Dendritic cell treated with granulocyte-macrophage colony-stimulating factor and Interleukin-4, amounts not matched to agents 40 ng/mL and 50 ng/mL, for 4 days (primary cell): ENCODE measurements at regions of chr17 and their contacts with region 1.

Region 1: DNA sequence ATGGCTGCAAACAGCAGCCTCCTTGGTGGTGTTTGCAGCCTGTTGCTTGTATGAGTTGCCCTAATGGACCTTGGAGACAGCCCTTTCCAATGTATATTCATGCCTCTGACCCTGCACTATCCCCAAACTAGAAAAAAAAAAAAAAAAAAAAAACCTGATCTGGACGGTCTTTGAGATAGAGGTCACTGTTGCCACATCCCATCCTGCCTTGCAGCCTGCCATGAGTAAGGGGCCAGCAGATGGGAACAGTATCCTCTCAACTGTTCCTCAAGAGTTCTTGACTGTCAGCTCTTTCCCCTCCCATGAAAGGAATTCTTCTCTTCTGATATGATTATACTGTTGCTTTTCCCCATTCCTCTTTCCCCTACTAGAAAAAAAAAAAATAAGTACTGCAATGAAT is 152.4 kb downstream of the SSH2 start:
- H3K4me3 Mint-ChIP-seq: no peak overlapping the region
- H3K27ac Mint-ChIP-seq: no peak overlapping the region
- H3K4me1 Mint-ChIP-seq: peaks cover 6% of the 10 kb centered on the region
- H3K27me3 Mint-ChIP-seq: no peaks in the 10 kb centered on the region

Region 2: DNA sequence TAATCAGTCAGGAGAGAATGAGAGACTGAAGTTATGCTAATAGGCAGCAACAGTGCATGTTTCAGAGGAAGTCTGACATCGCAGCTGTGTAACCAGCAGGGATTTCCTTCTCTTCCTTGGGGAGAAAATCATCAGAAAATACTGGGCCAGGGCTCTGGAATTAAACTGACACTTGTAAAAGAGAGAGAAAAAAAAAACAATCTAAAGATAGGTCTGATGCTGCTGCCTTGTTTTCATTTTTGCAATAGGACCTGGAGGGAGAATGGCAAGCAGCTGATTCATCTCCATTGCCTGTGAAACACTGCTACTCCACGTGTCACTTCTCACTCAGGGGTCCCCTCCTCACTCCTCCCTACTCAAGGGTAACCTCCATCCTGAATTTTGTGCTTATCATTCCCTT is 137.2 kb before region 1 on chr17:
- intact Hi-C with region 1: loop called (anchors 1 kb)
- H3K4me3 Mint-ChIP-seq: no peak overlapping the region
- H3K27ac Mint-ChIP-seq: no peak overlapping the region
- H3K4me1 Mint-ChIP-seq: peaks cover 36% of the 10 kb centered on the region
- H3K27me3 Mint-ChIP-seq: no peaks in the 10 kb centered on the region